MCF 10A (cell line): ENCODE measurements at regions of chr9 and their contacts with region 1.

Region 1: GRCh38 chr9:128275996-128276573 is at the starts of genes GOLGA2 and SWI5:
- DNase-seq: peak; percentile 99
- H3K4me3 Mint-ChIP-seq: peak within 1 kb of the TSS; percentile 92
- H3K27ac Mint-ChIP-seq: peak within 1 kb of the TSS; percentile 79
- H3K4me1 Mint-ChIP-seq: peaks cover 18% of the 10 kb centered on the region
- H3K27me3 Mint-ChIP-seq: no peaks in the 10 kb centered on the region
- CTCF ChIP-seq: no peak
- total RNA-seq, gene GOLGA2: 124 and 147 TPM in 2 replicates
- total RNA-seq, gene SWI5: 27.7 and 39.0 TPM in 2 replicates

Region 2: DNA sequence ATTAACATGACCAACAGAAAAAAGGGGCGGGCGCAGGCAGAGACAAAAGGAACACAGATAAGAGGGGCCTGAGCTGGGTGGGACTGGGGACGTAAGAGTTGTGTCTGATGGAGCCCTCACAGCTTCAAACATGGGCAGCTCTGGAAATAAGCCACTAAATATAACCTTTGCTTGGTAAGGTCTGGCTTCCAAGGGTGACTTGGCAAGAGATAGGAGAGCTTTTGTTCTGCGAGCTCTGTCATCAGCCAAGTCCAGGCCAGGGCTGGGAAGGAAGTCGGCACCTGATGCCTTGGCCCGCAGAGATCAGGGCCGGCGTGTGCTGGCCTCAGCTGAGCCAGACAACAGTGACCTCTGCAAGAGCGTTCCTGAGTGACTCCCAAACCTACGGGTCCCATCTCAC is 34.4 kb after region 1 on chr9:
- CTCF ChIA-PET with region 1: interaction called, 3 read pairs
- POLR2A ChIA-PET with region 1: interaction called, 12 read pairs
- intact Hi-C with region 1: no loop called
- DNase-seq: no peak
- H3K4me3 Mint-ChIP-seq: no peak overlapping the region
- H3K27ac Mint-ChIP-seq: no peak overlapping the region
- H3K4me1 Mint-ChIP-seq: no peaks in the 10 kb centered on the region
- H3K27me3 Mint-ChIP-seq: no peaks in the 10 kb centered on the region
- CTCF ChIP-seq: no peak

Region 3: DNA sequence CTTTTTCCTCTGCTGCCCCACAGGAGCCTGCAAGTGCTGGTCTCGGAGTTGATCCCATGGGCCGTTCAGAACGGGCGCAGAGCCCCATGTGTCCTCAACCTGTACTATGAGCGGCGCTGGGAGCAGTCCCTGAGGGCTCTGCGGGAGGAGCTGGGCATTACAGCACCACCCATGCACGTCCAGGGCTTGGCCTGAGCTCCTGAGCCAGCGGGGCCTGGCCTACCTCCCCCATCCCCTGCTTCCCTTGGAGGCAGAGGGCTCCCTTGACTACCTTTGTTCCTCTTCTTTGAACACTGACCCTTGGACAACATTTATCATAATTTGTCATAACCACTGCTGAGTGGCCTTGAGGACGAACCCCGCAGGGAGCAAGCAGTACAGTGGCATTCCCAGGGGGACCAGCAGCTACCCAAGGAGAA is 57.4 kb after region 1 on chr9:
- CTCF ChIA-PET with region 1: no interaction called
- POLR2A ChIA-PET with region 1: no interaction called
- intact Hi-C with region 1: loop called (anchors 1 kb)
- DNase-seq: no peak
- H3K4me3 Mint-ChIP-seq: no peak overlapping the region
- H3K27ac Mint-ChIP-seq: no peak overlapping the region
- H3K4me1 Mint-ChIP-seq: peaks cover 6% of the 10 kb centered on the region
- H3K27me3 Mint-ChIP-seq: no peaks in the 10 kb centered on the region
- CTCF ChIP-seq: no peak

Region 4: DNA sequence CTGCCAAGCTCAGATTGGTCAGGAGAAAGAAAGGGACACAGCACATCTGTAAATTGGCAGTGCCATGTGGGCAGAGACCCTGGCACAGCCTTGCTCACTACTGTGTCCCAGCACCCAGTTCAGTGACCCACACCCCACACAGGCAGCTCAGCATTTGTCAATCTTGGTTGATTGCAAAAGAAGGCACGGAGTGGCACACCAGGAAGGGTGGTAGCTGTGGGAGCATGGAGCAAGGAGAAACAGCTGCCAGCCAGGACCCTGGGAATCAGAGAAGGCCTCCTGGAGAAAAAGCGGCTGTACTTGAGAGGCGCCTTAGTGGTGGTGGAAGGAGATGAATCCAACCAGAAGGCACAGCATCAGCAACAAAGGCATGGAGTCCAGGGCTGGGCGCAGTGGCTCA is 67.8 kb after region 1 on chr9:
- CTCF ChIA-PET with region 1: no interaction called
- POLR2A ChIA-PET with region 1: no interaction called
- intact Hi-C with region 1: no loop called
- DNase-seq: no peak
- H3K4me3 Mint-ChIP-seq: no peak overlapping the region
- H3K27ac Mint-ChIP-seq: no peak overlapping the region
- H3K4me1 Mint-ChIP-seq: peaks cover 6% of the 10 kb centered on the region
- H3K27me3 Mint-ChIP-seq: no peaks in the 10 kb centered on the region
- CTCF ChIP-seq: no peak

Region 5: DNA sequence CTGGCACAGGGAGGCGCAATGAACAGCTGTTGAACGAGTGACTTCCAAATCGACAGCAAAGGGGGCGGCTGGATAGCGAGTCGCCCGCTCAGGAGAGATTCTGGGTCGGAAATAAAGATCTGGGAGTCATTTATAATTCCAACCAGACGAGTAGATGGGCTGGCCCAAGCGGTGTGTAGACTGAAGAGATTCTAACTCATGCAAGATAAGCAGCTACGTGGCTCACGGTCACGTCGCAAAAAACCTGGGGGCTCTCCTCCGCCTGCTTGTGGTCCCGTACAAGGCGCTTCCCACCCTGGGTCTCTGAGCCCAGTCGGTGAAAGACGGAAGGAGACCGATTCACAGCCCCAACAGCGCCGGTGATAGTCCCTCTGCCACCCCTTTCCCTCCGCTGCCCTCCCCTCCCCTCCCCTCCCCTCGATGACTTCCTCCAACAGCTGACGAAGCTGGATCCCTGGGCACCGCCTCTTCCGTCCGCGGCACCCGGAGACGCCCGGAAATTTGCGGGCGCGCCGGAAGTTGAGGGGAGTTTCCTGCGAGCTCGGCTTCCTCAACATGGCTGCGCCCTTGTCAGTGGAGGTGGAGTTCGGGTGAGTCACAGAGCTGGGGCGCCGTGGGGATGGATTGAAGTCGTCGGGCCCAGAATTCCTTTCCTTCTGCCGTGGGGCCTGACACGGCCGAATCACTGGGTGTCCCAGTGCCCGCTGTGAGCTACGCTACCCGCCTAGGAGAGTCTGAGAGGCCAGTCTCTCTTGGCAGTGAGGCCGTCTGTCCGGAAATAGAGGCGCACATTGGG is 94.9 kb after region 1 on chr9 and contains the start of gene URM1:
- CTCF ChIA-PET with region 1: interaction called, 3 read pairs
- POLR2A ChIA-PET with region 1: interaction called, 11 read pairs
- intact Hi-C with region 1: no loop called
- DNase-seq: peak; percentile 96
- H3K4me3 Mint-ChIP-seq: peak within 1 kb of the TSS; percentile 84
- H3K27ac Mint-ChIP-seq: peak within 1 kb of the TSS; percentile 84
- H3K4me1 Mint-ChIP-seq: peaks cover 34% of the 10 kb centered on the region
- H3K27me3 Mint-ChIP-seq: no peaks in the 10 kb centered on the region
- CTCF ChIP-seq: no peak
- total RNA-seq, gene URM1: 56.8 and 57.7 TPM in 2 replicates